Activated CD4-positive, alpha-beta T cell treated with anti-CD3 and anti-CD28 coated beads for 36 hours (primary cell): ENCODE measurements at regions of chr11 and their contacts with region 1.

Region 1: GRCh38 chr11:60831143-60831500 is 10.8 kb upstream of the CCDC86 start:
- DNase-seq: peak; percentile 90
- ATAC-seq: peak; percentile 95
- H3K4me3 Mint-ChIP-seq: no peak overlapping the region
- H3K27ac Mint-ChIP-seq: no peak overlapping the region
- H3K4me1 Mint-ChIP-seq: peaks cover 8% of the 10 kb centered on the region
- H3K27me3 Mint-ChIP-seq: peaks cover 6% of the 10 kb centered on the region

Region 2: DNA sequence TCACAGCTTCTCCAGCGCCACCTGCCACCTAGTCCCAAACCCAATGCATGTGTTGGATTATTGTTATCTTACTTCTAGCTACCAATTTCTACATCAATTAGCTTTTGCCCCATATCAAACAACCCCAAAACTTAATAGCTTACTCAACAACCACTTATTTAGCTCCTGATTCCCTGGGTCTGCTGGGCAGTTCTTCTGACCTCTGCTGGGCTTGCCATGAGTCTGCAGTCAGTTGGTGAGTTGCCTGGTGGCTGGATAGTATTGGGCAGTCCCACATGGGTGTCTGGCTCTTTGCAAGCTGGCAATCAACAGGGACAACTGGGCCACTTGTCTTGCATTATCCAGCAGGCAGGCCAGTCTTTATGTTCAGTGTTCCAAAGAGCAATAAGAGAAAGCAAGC is 88.1 kb before region 1 on chr11:
- CTCF ChIA-PET with region 1: no interaction called
- POLR2A ChIA-PET with region 1: no interaction called
- intact Hi-C with region 1: no loop called
- DNase-seq: no peak
- ATAC-seq: no peak
- H3K4me3 Mint-ChIP-seq: no peak overlapping the region
- H3K27ac Mint-ChIP-seq: no peak overlapping the region
- H3K4me1 Mint-ChIP-seq: no peaks in the 10 kb centered on the region
- H3K27me3 Mint-ChIP-seq: peaks cover 3% of the 10 kb centered on the region

Region 3: DNA sequence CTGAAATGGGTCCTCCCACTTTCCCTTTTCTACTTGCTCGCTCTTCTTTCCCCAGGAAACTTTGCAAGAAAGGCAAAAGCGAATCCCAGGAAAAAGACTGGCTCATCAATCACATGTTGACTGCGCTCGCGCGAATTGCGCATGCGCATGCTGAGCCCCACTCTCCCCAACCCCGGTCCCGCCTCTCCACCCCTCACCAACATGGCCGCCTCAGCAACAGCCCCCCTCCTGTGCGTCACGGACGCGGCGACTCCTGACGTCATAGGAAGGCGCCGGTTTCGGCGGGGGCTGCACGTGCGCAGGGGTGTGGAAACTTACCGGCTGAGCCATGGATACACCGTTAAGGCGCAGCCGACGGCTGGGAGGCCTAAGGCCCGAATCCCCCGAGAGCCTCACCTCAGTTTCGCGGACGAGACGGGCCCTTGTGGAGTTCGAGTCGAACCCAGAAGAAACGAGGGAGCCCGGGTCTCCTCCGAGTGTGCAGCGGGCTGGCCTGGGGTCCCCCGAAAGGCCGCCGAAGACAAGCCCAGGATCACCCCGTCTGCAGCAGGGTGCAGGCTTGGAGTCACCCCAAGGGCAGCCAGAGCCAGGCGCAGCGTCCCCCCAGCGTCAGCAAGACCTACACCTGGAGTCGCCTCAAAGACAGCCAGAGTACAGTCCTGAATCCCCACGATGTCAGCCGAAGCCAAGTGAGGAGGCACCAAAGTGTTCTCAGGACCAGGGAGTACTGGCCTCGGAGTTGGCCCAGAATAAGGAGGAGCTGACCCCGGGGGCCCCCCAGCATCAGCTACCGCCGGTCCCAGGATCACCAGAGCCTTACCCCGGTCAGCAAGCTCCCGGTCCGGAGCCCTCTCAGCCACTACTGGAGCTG is 10.9 kb after region 1 on chr11 and contains the start of gene CCDC86:
- CTCF ChIA-PET with region 1: interaction called, 19 read pairs
- POLR2A ChIA-PET with region 1: no interaction called
- intact Hi-C with region 1: no loop called
- DNase-seq: peak; percentile 98
- ATAC-seq: peak; percentile 95
- H3K4me3 Mint-ChIP-seq: peak within 1 kb of the TSS; percentile 83
- H3K27ac Mint-ChIP-seq: peak within 1 kb of the TSS; percentile 96
- H3K4me1 Mint-ChIP-seq: peaks cover 38% of the 10 kb centered on the region
- H3K27me3 Mint-ChIP-seq: no peaks in the 10 kb centered on the region
- total RNA-seq, gene CCDC86: 52.1 to 75.1 TPM

Region 4: DNA sequence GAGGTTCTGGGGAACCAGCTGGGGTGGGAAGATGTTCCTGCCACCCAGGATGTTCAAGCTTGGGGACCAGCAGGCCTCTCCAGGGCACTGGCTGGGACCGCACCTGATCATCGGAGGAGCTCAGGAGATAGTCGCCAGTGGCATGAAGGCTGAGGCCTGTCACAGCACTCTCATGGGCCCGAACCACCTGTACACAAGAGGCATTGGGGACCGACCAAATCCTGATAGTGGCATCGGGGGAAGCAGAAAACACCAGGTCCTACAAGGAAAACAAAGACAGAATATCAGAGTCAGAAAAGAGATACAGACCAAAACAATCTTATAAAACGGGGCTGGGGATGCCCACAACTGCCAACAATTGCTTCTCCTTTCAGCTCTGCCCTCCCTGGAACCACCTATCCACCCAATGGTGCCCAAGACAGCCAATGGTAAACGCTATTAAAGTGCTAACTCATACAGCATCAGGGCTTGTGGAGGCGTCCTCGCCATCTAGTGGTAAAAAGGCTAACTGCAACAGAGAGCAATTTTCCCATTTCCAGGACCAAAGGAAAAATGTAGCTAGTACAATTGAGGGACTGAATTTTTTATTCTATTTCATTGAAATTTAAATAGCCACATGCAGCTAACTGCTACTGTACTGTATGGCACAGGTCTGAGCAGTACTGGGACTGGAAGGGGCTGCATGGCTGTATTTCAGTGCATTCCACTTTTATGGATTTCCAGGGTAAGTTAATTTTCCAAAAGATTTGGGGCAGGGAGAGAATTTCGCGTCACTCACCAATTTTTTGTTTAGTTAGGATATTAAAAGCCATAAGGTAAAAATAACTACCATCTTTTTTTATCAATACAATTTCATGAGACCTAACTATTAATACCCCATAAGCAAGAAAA is 68.2 kb after region 1 on chr11:
- CTCF ChIA-PET with region 1: interaction called, 18 read pairs
- POLR2A ChIA-PET with region 1: no interaction called
- intact Hi-C with region 1: loop called (anchors 1 to 2 kb)
- DNase-seq: peak; percentile 32
- ATAC-seq: peak; percentile 87
- H3K4me3 Mint-ChIP-seq: no peak overlapping the region
- H3K27ac Mint-ChIP-seq: no peak overlapping the region
- H3K4me1 Mint-ChIP-seq: peaks cover 12% of the 10 kb centered on the region
- H3K27me3 Mint-ChIP-seq: no peaks in the 10 kb centered on the region

Region 5: GRCh38 chr11:61129639-61130523 is 298.8 kb after region 1 on chr11:
- CTCF ChIA-PET with region 1: interaction called, 4 read pairs
- POLR2A ChIA-PET with region 1: no interaction called
- intact Hi-C with region 1: loop called (anchors 1 kb)
- DNase-seq: peak; percentile 97
- ATAC-seq: peak; percentile 89
- H3K4me3 Mint-ChIP-seq: peak overlapping the region; percentile 14
- H3K27ac Mint-ChIP-seq: peak overlapping the region; percentile 64
- H3K4me1 Mint-ChIP-seq: peaks cover 27% of the 10 kb centered on the region
- H3K27me3 Mint-ChIP-seq: no peaks in the 10 kb centered on the region

Region 6: GRCh38 chr11:61384271-61385242 is 553.4 kb after region 1 on chr11:
- CTCF ChIA-PET with region 1: interaction called, 9 read pairs
- POLR2A ChIA-PET with region 1: no interaction called
- intact Hi-C with region 1: loop called in 1 of 2 experiments (anchors 1 kb)
- DNase-seq: no peak
- ATAC-seq: no peak
- H3K4me3 Mint-ChIP-seq: no peak overlapping the region
- H3K27ac Mint-ChIP-seq: no peak overlapping the region
- H3K4me1 Mint-ChIP-seq: peaks cover 3% of the 10 kb centered on the region
- H3K27me3 Mint-ChIP-seq: no peaks in the 10 kb centered on the region